PC-9 (cell line): ENCODE measurements at regions of chr5 and their contacts with region 1.

Region 1: DNA sequence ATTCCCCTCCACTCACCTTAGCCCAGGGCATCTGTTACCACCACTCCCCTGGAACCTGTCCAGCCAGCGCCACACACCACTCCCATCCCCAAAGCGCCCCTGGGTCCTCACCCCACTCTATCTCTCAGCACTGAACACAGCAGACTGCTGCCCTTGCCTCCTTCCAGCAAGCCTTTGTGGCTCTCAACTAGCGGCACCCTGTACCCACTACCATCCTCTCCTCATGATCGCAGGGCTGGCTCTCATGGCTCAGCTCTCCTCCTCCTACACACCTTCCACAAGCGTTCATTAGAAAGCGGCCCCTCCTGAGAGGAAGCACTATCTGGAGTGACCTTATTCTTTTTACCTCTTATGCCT is 13.3 kb upstream of the BASP1 start:
- DNase-seq: no peak
- H3K4me3 ChIP-seq: no peak overlapping the region
- H3K27ac ChIP-seq: no peak overlapping the region
- H3K4me1 ChIP-seq: no peaks in the 10 kb centered on the region
- H3K27me3 ChIP-seq: no peaks in the 10 kb centered on the region
- CTCF ChIP-seq: no peak

Region 2: GRCh38 chr5:16160706-16161105 is 1043.4 kb before region 1 on chr5:
- CTCF ChIA-PET with region 1: interaction called, 5 read pairs
- POLR2A ChIA-PET with region 1: no interaction called
- intact Hi-C with region 1: loop called (anchors 1 kb)
- DNase-seq: peak; percentile 35 to 51
- H3K4me3 ChIP-seq: no peak overlapping the region
- H3K27ac ChIP-seq: no peak overlapping the region
- H3K4me1 ChIP-seq: no peaks in the 10 kb centered on the region
- H3K27me3 ChIP-seq: no peaks in the 10 kb centered on the region
- CTCF ChIP-seq: peak; percentile 80

Region 3: GRCh38 chr5:16465544-16466466 is 738.3 kb before region 1 on chr5 and contains the start of gene ZNF622:
- CTCF ChIA-PET with region 1: no interaction called
- POLR2A ChIA-PET with region 1: no interaction called
- intact Hi-C with region 1: loop called (anchors 5 kb)
- DNase-seq: peak; percentile 89 to 97
- H3K4me3 ChIP-seq: peak within 1 kb of the TSS; percentile 93
- H3K27ac ChIP-seq: peak within 1 kb of the TSS; percentile 50
- H3K4me1 ChIP-seq: peaks cover 36% of the 10 kb centered on the region
- H3K27me3 ChIP-seq: no peaks in the 10 kb centered on the region
- CTCF ChIP-seq: no peak
- total RNA-seq, gene ZNF622: 54.4 and 73.5 TPM in 2 replicates

Region 4: DNA sequence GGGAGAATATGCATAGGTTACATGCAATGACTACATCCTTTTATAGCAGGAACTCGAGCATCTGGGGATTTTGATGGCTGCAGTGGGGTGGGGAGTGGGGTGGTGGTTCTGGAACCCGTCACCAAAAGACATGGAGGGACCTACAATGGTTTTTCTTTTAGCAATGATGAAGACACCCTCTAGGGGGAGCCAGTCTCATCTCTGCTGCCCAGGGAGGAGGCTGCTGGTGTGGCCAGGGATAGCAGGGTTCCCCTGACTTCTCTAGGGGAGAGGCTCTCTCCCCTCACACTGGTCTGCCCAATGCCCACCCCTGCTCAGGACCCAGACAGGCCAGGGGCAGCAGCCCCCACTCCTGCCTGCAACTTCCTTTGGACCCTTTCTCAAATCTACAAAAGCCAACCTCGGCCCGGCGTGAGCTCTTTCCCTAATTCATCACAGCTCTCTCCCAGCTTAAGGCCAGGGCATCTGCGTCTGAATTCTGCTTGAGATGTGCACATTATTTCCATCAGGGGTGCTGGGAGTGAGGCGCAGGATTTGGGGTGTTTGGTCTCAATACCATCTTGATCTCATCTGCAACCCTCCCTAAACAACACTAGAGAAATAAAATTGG is 513.8 kb before region 1 on chr5:
- CTCF ChIA-PET with region 1: interaction called, 4 read pairs
- POLR2A ChIA-PET with region 1: no interaction called
- intact Hi-C with region 1: loop called (anchors 1 kb)
- DNase-seq: peak in 1 of 2 experiments; percentile 66
- H3K4me3 ChIP-seq: no peak overlapping the region
- H3K27ac ChIP-seq: no peak overlapping the region
- H3K4me1 ChIP-seq: no peaks in the 10 kb centered on the region
- H3K27me3 ChIP-seq: no peaks in the 10 kb centered on the region
- CTCF ChIP-seq: peak; percentile 85

Region 5: GRCh38 chr5:17123010-17123409 is 81.1 kb before region 1 on chr5:
- CTCF ChIA-PET with region 1: no interaction called
- POLR2A ChIA-PET with region 1: no interaction called
- intact Hi-C with region 1: no loop called
- DNase-seq: no peak
- H3K4me3 ChIP-seq: no peak overlapping the region
- H3K27ac ChIP-seq: no peak overlapping the region
- H3K4me1 ChIP-seq: peaks cover 24% of the 10 kb centered on the region
- H3K27me3 ChIP-seq: no peaks in the 10 kb centered on the region
- CTCF ChIP-seq: no peak

Region 6: DNA sequence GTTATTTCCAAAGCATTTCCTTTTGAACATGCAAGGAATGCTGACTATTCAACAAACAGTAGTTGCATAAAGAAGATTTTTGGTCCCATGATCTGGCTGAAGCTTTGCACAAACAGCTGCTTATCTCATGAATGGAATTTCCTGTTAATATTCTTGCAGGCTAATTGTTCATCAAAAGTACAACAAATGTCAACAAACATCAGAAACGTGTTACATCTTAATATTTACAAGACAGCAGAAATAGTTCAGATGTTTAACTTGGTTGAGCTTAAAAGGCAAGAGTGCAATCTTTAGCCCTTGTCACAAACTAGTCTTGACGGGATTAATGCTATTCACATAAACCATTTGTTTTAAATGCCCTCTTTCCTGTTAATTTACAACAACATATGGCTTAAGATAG is 34.6 kb before region 1 on chr5:
- CTCF ChIA-PET with region 1: interaction called, 10 read pairs
- POLR2A ChIA-PET with region 1: no interaction called
- intact Hi-C with region 1: no loop called
- DNase-seq: no peak
- H3K4me3 ChIP-seq: no peak overlapping the region
- H3K27ac ChIP-seq: no peak overlapping the region
- H3K4me1 ChIP-seq: no peaks in the 10 kb centered on the region; the same call in 1 of the 2 replicates
- H3K27me3 ChIP-seq: no peaks in the 10 kb centered on the region
- CTCF ChIP-seq: no peak